CD8-positive, alpha-beta memory T cell (primary cell): ENCODE measurements at regions of chr9 and their contacts with region 1.

Region 1: DNA sequence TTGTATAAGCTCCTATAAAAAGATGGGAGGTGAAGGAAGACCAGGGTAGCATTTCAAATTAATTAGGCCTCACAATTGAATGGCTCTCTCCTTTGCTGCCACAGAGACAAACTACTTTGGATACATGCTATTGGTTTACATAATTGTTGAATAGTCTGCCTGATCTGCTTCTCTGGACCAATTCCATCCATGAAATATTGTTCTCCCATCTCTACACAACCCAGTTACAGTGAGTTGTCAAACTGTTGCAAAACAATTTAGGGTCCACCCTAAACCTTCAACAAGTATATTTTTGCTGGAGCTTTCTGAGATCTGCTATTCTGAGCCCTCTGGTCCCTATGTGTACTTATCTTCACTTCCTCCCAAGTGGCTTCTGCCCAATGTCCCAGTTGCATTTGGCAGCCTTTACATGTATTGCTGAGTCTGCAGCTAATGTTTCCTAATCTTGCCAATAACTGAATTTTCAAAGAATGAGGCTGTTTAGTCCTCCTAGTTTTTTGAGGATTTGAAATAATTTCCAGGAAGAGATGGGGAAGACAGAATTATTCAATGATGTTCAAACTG is 38.9 kb downstream of the AGTPBP1 start:
- DNase-seq: no peak
- H3K4me3 ChIP-seq: no peak overlapping the region
- H3K4me3 Mint-ChIP-seq: no peak overlapping the region
- H3K27ac ChIP-seq: no peak overlapping the region
- H3K27ac Mint-ChIP-seq: peak overlapping the region in 3 of 8 donors; percentile 8 to 59 (median 29)
- H3K4me1 ChIP-seq: no peaks in the 10 kb centered on the region
- H3K4me1 Mint-ChIP-seq: peaks cover 37 to 64% (median 54%) of the 10 kb centered on the region in 3 donors
- H3K27me3 ChIP-seq: no peaks in the 10 kb centered on the region
- H3K27me3 Mint-ChIP-seq: no peaks in the 10 kb centered on the region

Region 2: GRCh38 chr9:85600675-85601263 is 102.0 kb before region 1 on chr9:
- CTCF ChIA-PET with region 1: no interaction called
- POLR2A ChIA-PET with region 1: no interaction called
- DNase-seq: peak in 3 of 5 donors; percentile 13 to 55 (median 17)
- H3K4me3 ChIP-seq: no peak overlapping the region
- H3K4me3 Mint-ChIP-seq: peak overlapping the region in 3 of 7 donors; percentile 32 to 66 (median 34)
- H3K27ac ChIP-seq: no peak overlapping the region
- H3K27ac Mint-ChIP-seq: peak overlapping the region in 5 of 8 donors; percentile 47 to 78 (median 64)
- H3K4me1 ChIP-seq: peaks cover 3% of the 10 kb centered on the region
- H3K4me1 Mint-ChIP-seq: peaks cover 28 to 42% (median 36%) of the 10 kb centered on the region in 3 donors
- H3K27me3 ChIP-seq: no peaks in the 10 kb centered on the region
- H3K27me3 Mint-ChIP-seq: no peaks in the 10 kb centered on the region

Region 3: DNA sequence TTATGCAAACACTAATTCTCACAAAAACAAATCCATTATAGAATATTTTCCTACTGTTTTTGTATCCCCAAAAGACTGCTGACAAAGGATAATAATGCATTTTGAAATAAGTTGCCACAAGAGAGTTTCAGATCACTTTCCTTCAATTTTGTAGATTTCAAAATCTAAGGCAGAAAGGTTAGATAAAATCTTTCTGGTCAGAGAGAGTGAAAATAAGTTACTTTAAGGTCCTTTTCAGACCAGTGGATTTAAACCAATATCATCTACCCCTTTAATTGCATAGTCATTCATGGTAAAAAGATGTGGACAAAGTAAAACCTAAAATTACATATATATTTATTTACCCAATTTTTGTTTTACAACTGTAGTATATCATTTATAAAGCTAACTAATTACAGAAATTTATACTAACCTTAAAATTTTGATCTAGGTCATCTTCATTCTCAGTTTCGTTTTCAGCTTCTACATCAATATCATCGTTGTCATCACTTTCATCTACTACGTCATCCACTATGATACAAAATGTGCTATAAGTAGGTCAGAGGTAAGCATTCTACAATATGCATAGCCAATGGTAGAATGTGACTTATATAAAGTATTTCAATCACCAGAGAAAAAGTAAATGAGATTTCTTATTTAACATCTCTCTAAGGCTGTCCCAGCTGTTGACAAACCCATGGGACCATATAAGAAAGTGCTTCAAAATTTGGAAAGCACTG is 56.7 kb before region 1 on chr9:
- CTCF ChIA-PET with region 1: no interaction called
- POLR2A ChIA-PET with region 1: no interaction called
- DNase-seq: peak in 1 of 5 donors; percentile 31
- H3K4me3 ChIP-seq: no peak overlapping the region
- H3K4me3 Mint-ChIP-seq: no peak overlapping the region
- H3K27ac ChIP-seq: no peak overlapping the region
- H3K27ac Mint-ChIP-seq: peak overlapping the region in 6 of 8 donors; percentile 38 to 89 (median 72)
- H3K4me1 ChIP-seq: no peaks in the 10 kb centered on the region
- H3K4me1 Mint-ChIP-seq: peaks cover 7 to 20% (median 14%) of the 10 kb centered on the region in 3 donors
- H3K27me3 ChIP-seq: no peaks in the 10 kb centered on the region
- H3K27me3 Mint-ChIP-seq: no peaks in the 10 kb centered on the region

Region 4: GRCh38 chr9:85716031-85716877 is 13.4 kb after region 1 on chr9:
- CTCF ChIA-PET with region 1: interaction called, 11 read pairs
- POLR2A ChIA-PET with region 1: no interaction called
- DNase-seq: no peak
- H3K4me3 ChIP-seq: no peak overlapping the region
- H3K4me3 Mint-ChIP-seq: peak overlapping the region; percentile 14 to 78 (median 71)
- H3K27ac ChIP-seq: peak overlapping the region; percentile 38
- H3K27ac Mint-ChIP-seq: peak overlapping the region; percentile 27 to 97 (median 74)
- H3K4me1 ChIP-seq: peaks cover 18% of the 10 kb centered on the region
- H3K4me1 Mint-ChIP-seq: peaks cover 59 to 75% (median 72%) of the 10 kb centered on the region in 3 donors
- H3K27me3 ChIP-seq: no peaks in the 10 kb centered on the region
- H3K27me3 Mint-ChIP-seq: no peaks in the 10 kb centered on the region

Region 5: DNA sequence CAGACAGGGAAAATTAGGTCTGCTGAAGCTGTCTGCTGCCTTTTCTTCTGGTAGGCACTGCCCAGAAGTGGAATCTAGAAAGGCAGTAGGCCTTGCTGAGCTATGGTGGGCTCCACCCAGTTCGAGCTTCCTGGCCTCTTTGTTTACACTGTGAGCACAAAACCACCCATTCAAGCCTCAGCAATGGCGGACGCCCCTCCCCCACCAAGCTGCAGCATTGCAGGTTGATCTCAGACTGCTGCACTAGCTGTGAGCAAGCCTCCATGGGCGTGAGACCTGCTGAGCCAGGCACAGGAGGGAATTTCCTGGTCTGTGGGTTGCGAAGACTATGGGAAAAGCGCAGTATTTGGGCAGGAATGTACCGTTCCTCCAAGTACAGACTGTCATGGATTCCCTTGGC is 20.4 kb after region 1 on chr9:
- CTCF ChIA-PET with region 1: interaction called, 10 read pairs
- POLR2A ChIA-PET with region 1: no interaction called
- DNase-seq: peak; percentile 41 to 86 (median 65)
- H3K4me3 ChIP-seq: peak overlapping the region; percentile 34
- H3K4me3 Mint-ChIP-seq: peak overlapping the region; percentile 64 to 84 (median 74)
- H3K27ac ChIP-seq: no peak overlapping the region
- H3K27ac Mint-ChIP-seq: peak overlapping the region; percentile 48 to 96 (median 90)
- H3K4me1 ChIP-seq: peaks cover 41% of the 10 kb centered on the region
- H3K4me1 Mint-ChIP-seq: peaks cover 72 to 92% (median 89%) of the 10 kb centered on the region in 3 donors
- H3K27me3 ChIP-seq: no peaks in the 10 kb centered on the region
- H3K27me3 Mint-ChIP-seq: no peaks in the 10 kb centered on the region

Region 6: GRCh38 chr9:85741875-85742629 is 39.2 kb after region 1 on chr9 and contains the start of gene AGTPBP1:
- CTCF ChIA-PET with region 1: interaction called, 15 read pairs
- POLR2A ChIA-PET with region 1: interaction called, 4 read pairs
- DNase-seq: peak; percentile 97 to 98 (median 97)
- H3K4me3 ChIP-seq: peak within 1 kb of the TSS; percentile 89
- H3K4me3 Mint-ChIP-seq: peak within 1 kb of the TSS; percentile 93 to 97 (median 96)
- H3K27ac ChIP-seq: peak within 1 kb of the TSS; percentile 93
- H3K27ac Mint-ChIP-seq: peak within 1 kb of the TSS; percentile 95 to 99 (median 98)
- H3K4me1 ChIP-seq: peaks cover 18% of the 10 kb centered on the region
- H3K4me1 Mint-ChIP-seq: peaks cover 33 to 58% (median 55%) of the 10 kb centered on the region in 3 donors
- H3K27me3 ChIP-seq: no peaks in the 10 kb centered on the region
- H3K27me3 Mint-ChIP-seq: no peaks in the 10 kb centered on the region
- total RNA-seq, gene AGTPBP1: 27.5 to 30.2 TPM

Region 7: DNA sequence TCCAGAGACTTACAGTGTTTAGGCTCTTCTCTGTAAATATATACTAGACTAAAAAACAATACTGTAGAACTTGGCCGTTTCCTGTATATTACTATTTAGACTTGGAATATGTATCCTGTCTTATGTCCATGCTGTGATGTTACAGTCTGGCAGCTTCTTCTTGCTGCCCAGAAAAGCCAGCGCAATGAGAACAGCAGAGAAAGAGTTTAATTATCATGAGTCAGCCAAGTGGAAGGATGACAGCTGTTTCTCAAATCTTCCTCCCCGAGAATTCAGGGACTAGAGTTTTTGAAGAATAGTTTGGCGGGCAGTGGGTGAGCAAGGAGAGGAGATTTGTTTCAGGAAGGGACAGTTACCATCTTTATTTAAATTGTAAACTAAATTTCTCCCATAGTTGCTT is 275.7 kb after region 1 on chr9:
- CTCF ChIA-PET with region 1: no interaction called
- POLR2A ChIA-PET with region 1: no interaction called
- DNase-seq: no peak
- H3K4me3 ChIP-seq: no peak overlapping the region
- H3K4me3 Mint-ChIP-seq: no peak overlapping the region
- H3K27ac ChIP-seq: no peak overlapping the region
- H3K27ac Mint-ChIP-seq: no peak overlapping the region
- H3K4me1 ChIP-seq: no peaks in the 10 kb centered on the region
- H3K4me1 Mint-ChIP-seq: peaks cover 0 to 12% (median 2%) of the 10 kb centered on the region in 3 donors
- H3K27me3 ChIP-seq: no peaks in the 10 kb centered on the region
- H3K27me3 Mint-ChIP-seq: no peaks in the 10 kb centered on the region